Activated CD4-positive, alpha-beta T cell treated with anti-CD3 and anti-CD28 coated beads, Interleukin-2, amount 10 ng/mL, durations not matched to agents 24 days and 14 days (primary cell): ENCODE measurements at regions of chr21 and their contacts with region 1.

Region 1: DNA sequence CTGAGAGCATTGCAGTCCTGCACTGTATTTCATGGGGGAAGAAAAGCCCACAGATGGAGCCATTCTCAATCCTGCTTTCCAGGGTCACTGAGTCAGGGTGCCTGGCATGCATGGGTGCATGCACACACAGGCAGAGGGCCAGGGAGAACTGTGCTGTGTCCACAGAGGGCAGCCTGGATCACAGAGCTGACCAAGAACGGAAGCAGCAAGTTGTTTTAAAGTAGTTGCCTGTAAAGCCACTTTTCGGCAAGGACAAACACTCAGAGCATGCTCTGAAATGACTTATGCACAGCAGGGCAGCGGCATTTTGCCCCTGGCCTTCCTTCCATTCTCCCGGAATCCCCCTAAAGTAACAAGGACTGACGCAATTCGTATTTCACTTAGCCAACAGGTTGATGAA is 3.6 kb downstream of the ERG start:
- DNase-seq: no peak
- H3K4me3 Mint-ChIP-seq: no peak overlapping the region
- H3K27ac Mint-ChIP-seq: no peak overlapping the region
- H3K4me1 Mint-ChIP-seq: peaks cover 2% of the 10 kb centered on the region
- H3K27me3 Mint-ChIP-seq: peaks cover 69% of the 10 kb centered on the region

Region 2: GRCh38 chr21:38448677-38449385 is 45.9 kb before region 1 on chr21:
- intact Hi-C with region 1: no loop called
- DNase-seq: no peak
- H3K4me3 Mint-ChIP-seq: no peak overlapping the region
- H3K27ac Mint-ChIP-seq: no peak overlapping the region
- H3K4me1 Mint-ChIP-seq: no peaks in the 10 kb centered on the region
- H3K27me3 Mint-ChIP-seq: peaks cover 8% of the 10 kb centered on the region

Region 3: DNA sequence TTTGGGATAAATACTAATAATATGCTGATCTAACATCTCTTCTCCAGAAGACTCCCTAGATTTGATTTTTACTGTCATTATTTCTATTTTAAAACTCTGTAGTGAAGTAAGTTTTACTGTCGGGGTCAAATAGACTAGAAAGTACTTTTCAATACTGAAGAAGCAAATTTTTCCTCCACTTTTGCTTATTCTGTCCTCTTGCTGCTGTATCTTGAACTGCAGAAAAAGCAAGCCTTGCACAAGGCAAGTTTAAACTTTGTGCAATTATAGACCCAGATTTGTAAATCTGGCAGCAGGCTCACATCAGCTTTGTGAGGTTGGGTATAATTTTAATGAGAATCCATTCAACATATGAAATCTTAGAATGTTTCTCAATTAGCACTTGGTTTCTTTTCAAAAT is 159.9 kb after region 1 on chr21:
- intact Hi-C with region 1: loop called (anchors 10 kb)
- DNase-seq: no peak
- H3K4me3 Mint-ChIP-seq: no peak overlapping the region
- H3K27ac Mint-ChIP-seq: no peak overlapping the region
- H3K4me1 Mint-ChIP-seq: no peaks in the 10 kb centered on the region
- H3K27me3 Mint-ChIP-seq: peaks cover 36% of the 10 kb centered on the region